H1 (cell line): ENCODE measurements at regions of chr3 and their contacts with region 1.

Region 1: GRCh38 chr3:46488735-46489361 is 8.9 kb upstream of the RTP3 start:
- DNase-seq: peak; percentile 92 to 98
- H3K4me3 ChIP-seq: no peak overlapping the region
- H3K27ac ChIP-seq: no peak overlapping the region
- H3K4me1 ChIP-seq: peaks cover 4 to 8% (median 6%) of the 10 kb centered on the region in 4 experiments; a peak in 6 of 7 replicates
- H3K27me3 ChIP-seq: no peaks in the 10 kb centered on the region; a peak in 2 of 7 replicates
- CTCF ChIP-seq: peak; percentile 100
- EP300 ChIP-seq: peak; percentile 10 to 47; a peak in 2 of 3 replicates
- POLR2A ChIP-seq: no peak
- RAD21 ChIP-seq: peak; percentile 99 to 100

Region 2: DNA sequence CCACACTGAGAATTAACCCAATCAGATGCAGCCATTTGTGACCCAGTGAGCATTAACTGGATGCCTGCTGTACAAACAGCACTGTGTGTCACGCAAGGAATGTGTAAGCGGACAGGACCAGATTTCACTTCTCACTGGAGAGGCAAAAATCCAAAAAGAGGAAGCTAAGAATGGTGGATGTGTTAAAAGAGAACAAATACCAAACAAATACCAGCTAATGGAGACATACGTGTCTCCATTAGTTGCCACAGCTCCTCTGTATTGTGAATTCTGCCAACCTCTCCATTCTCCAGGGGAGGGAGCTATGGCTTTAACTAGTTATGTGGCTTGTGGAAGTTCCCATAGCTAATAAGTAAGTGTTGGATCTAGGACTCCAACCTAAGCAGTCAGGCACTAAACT is 26.7 kb before region 1 on chr3:
- CTCF ChIA-PET with region 1: interaction called, 38 read pairs
- POLR2A ChIA-PET with region 1: no interaction called
- DNase-seq: no peak
- H3K4me3 ChIP-seq: no peak overlapping the region
- H3K27ac ChIP-seq: no peak overlapping the region
- H3K4me1 ChIP-seq: peaks cover 0 to 6% (median 4%) of the 10 kb centered on the region in 4 experiments; a peak in 4 of 7 replicates
- H3K27me3 ChIP-seq: peaks cover 7 to 28% (median 24%) of the 10 kb centered on the region in 4 experiments
- CTCF ChIP-seq: peak in 2 of 3 experiments; percentile 45 to 47; a peak in 2 of 4 replicates
- EP300 ChIP-seq: no peak
- POLR2A ChIP-seq: no peak
- RAD21 ChIP-seq: peak; percentile 45 to 62

Region 3: GRCh38 chr3:46517016-46517793 is 28.4 kb after region 1 on chr3:
- CTCF ChIA-PET with region 1: interaction called, 14 read pairs
- POLR2A ChIA-PET with region 1: no interaction called
- DNase-seq: no peak
- H3K4me3 ChIP-seq: no peak overlapping the region
- H3K27ac ChIP-seq: no peak overlapping the region
- H3K4me1 ChIP-seq: no peaks in the 10 kb centered on the region
- H3K27me3 ChIP-seq: no peaks in the 10 kb centered on the region
- CTCF ChIP-seq: no peak
- EP300 ChIP-seq: no peak
- POLR2A ChIP-seq: no peak
- RAD21 ChIP-seq: no peak

Region 4: GRCh38 chr3:46566036-46566641 is 77.3 kb after region 1 on chr3 and contains the start of gene LRRC2:
- CTCF ChIA-PET with region 1: interaction called, 45 read pairs
- POLR2A ChIA-PET with region 1: interaction called, 4 read pairs
- DNase-seq: no peak
- H3K4me3 ChIP-seq: peak within 1 kb of the TSS; percentile 31 to 58 (median 44)
- H3K27ac ChIP-seq: no peak within 1 kb of the TSS
- H3K4me1 ChIP-seq: peaks cover 9 to 27% (median 14%) of the 10 kb centered on the region in 4 experiments
- H3K27me3 ChIP-seq: no peaks in the 10 kb centered on the region; a peak in 1 of 7 replicates
- CTCF ChIP-seq: no peak
- EP300 ChIP-seq: no peak
- POLR2A ChIP-seq: no peak
- RAD21 ChIP-seq: no peak
- total RNA-seq, gene LRRC2: 6.4 and 7.3 TPM in 2 replicates

Region 5: DNA sequence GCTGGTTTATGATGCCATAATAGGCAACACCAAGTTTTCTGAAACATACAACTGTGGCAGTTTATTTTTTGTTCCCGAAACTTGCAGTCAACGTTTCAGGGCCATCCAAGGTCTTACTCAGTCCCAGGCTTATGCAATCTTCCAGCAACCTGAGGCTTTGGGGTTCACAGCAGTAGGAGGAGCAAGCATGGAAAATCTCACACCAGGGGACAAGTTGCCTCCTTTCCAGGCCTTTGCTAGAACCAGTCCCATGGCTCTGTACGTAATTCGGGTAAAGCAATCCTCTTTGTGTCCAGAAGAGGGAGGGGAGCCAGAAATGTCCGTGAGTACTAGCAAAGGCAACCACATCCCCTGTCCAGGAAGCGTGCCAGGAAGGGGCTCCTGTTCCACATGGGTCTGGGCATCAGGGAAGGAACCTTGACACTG is 118.8 kb after region 1 on chr3:
- CTCF ChIA-PET with region 1: interaction called, 16 read pairs
- POLR2A ChIA-PET with region 1: no interaction called
- DNase-seq: peak in 1 of 2 experiments; percentile 58
- H3K4me3 ChIP-seq: no peak overlapping the region
- H3K27ac ChIP-seq: no peak overlapping the region
- H3K4me1 ChIP-seq: peaks cover 3 to 23% (median 9%) of the 10 kb centered on the region in 4 experiments
- H3K27me3 ChIP-seq: no peaks in the 10 kb centered on the region
- CTCF ChIP-seq: peak; percentile 31 to 72 (median 68)
- EP300 ChIP-seq: no peak
- POLR2A ChIP-seq: no peak
- RAD21 ChIP-seq: peak; percentile 49 to 68

Region 6: DNA sequence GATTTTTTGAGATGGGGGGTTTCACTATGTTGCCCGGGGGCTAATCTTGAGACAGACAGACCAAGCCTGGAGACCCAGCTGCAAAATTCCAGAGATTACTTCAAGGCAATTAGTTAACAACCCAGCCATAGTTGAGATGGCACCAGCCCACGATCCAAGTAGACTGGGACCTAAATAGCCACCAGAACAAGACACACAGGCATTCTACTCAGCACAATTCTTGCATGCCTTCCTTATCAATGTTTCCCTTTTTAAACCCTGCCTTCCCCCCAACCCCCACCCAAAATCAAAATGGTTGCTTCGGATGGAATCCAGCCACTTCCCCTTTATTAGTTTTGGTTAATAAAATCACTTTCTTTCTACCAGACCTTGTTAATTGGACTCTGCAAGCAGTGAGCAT is 152.1 kb after region 1 on chr3:
- CTCF ChIA-PET with region 1: interaction called, 11 read pairs
- POLR2A ChIA-PET with region 1: no interaction called
- DNase-seq: no peak
- H3K4me3 ChIP-seq: no peak overlapping the region
- H3K27ac ChIP-seq: no peak overlapping the region
- H3K4me1 ChIP-seq: no peaks in the 10 kb centered on the region
- H3K27me3 ChIP-seq: no peaks in the 10 kb centered on the region
- CTCF ChIP-seq: no peak
- EP300 ChIP-seq: no peak
- POLR2A ChIP-seq: no peak
- RAD21 ChIP-seq: no peak

Region 7: GRCh38 chr3:46681856-46682540 is 193.2 kb after region 1 on chr3:
- CTCF ChIA-PET with region 1: interaction called, 11 read pairs
- POLR2A ChIA-PET with region 1: no interaction called
- DNase-seq: no peak
- H3K4me3 ChIP-seq: no peak overlapping the region
- H3K27ac ChIP-seq: no peak overlapping the region
- H3K4me1 ChIP-seq: peaks cover 0 to 3% (median 0%) of the 10 kb centered on the region in 4 experiments; a peak in 1 of 7 replicates
- H3K27me3 ChIP-seq: no peaks in the 10 kb centered on the region
- CTCF ChIP-seq: no peak
- EP300 ChIP-seq: no peak
- POLR2A ChIP-seq: no peak
- RAD21 ChIP-seq: no peak